Naive thymus-derived CD4-positive, alpha-beta T cell (primary cell): ENCODE measurements at regions of chr3 and their contacts with region 1.

Region 1: DNA sequence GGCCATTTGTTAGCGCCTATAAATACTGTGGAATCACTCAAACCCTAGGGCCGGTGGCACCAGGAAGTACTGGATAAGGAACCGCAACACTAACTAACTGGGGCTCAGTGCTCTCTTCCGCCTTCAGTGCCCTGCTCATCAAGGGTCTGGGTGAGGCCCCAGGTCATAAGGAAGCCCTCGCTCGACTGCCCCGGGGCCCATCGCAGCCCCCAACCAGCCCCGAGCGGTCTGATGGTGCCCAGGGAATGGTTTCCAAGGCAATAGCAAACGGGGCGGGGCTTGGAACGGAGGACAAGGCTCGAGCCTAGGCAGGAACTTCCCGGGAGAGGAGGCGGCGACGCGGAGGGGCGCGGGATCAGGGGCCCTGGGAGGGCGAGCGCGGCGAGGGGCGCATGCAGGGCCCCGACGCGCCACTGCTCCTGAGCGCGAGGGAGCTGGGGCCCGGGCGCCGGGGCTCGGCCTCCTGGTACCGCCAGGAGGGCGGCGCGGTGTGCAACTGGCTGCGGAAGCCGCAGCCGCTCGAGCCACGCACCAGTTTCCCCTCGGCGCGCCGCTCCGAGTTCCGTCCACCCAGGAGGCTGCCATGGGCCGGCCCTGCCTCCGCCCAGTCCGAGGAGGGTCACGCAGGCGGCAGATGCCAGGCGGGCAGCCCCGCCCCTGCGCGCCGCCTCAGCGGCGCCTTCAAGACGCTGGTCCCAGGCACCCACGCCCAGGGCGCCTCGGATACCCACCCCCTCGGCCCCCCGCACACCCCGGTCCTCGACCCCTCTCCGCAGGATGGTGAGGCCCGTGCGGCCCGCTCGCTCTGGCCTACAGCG is at the start of gene TTLL3:
- DNase-seq: peak; percentile 33 to 50 (median 43)
- ATAC-seq: peak; percentile 76
- H3K4me3 ChIP-seq: peak within 1 kb of the TSS; percentile 76
- H3K4me3 Mint-ChIP-seq: peak within 1 kb of the TSS; percentile 89 to 96 (median 92)
- H3K27ac ChIP-seq: peak within 1 kb of the TSS; percentile 90
- H3K27ac Mint-ChIP-seq: peak within 1 kb of the TSS; percentile 92 to 98 (median 96)
- H3K4me1 ChIP-seq: peaks cover 21 to 28% of the 10 kb centered on the region in 2 donors
- H3K4me1 Mint-ChIP-seq: peaks cover 31 to 41% (median 38%) of the 10 kb centered on the region in 7 donors
- H3K27me3 ChIP-seq: no peaks in the 10 kb centered on the region
- H3K27me3 Mint-ChIP-seq: no peaks in the 10 kb centered on the region
- total RNA-seq, gene TTLL3: 54.9 to 106 (median 68.0) TPM

Region 2: GRCh38 chr3:9946112-9947024 is 136.5 kb after region 1 on chr3:
- CTCF ChIA-PET with region 1: no interaction called
- POLR2A ChIA-PET with region 1: no interaction called
- intact Hi-C with region 1: loop called in 1 of 2 experiments (anchors 1 kb)
- DNase-seq: peak; percentile 70 to 88 (median 80)
- ATAC-seq: peak; percentile 94
- H3K4me3 ChIP-seq: peak overlapping the region; percentile 50
- H3K4me3 Mint-ChIP-seq: peak overlapping the region; percentile 42 to 85 (median 78)
- H3K27ac ChIP-seq: peak overlapping the region; percentile 74
- H3K27ac Mint-ChIP-seq: peak overlapping the region in 8 of 9 donors; percentile 56 to 91 (median 82)
- H3K4me1 ChIP-seq: peaks cover 7% of the 10 kb centered on the region in 2 donors
- H3K4me1 Mint-ChIP-seq: peaks cover 8 to 16% (median 11%) of the 10 kb centered on the region in 7 donors
- H3K27me3 ChIP-seq: no peaks in the 10 kb centered on the region
- H3K27me3 Mint-ChIP-seq: no peaks in the 10 kb centered on the region

Region 3: DNA sequence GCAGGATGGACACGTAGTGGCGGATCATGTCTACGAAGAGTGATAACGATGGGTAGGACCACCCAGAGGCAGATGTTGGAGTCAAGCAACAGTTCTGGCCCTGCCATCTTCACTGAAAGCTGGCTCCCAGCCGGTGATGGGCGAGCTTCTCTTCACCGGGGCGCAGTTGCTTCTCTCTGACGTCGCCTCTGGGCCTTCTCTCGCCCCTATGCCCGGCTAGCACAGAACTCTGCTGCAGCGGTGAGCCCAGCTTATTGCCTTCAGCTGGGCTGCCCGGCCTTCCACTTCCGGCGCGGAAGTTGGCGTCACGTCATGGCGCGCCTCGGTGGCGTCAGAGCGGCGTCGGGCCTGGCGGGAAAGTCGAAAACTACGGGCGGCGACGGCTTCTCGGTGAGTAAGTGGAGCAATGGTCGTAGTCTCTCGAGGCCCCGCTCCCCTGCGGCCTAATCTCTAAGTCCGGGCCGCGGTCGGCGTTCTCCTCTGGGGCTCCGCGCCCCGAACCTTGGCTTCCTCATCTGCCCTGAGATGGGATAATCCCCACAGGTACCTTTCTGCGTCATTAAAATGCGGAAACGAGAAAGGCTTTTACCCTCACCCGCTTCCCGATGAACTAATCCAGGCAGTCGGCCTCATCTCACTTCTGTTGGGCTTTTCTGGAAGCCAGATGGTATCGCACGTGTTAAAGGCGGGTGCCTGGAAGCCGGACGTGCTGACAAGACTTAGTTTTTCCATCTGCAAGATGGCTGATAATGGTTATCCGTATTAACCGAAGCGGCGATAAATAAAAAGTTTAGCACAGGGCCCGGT is 216.5 kb after region 1 on chr3 and contains the start of gene FANCD2:
- CTCF ChIA-PET with region 1: no interaction called
- POLR2A ChIA-PET with region 1: no interaction called
- intact Hi-C with region 1: no loop called
- DNase-seq: peak; percentile 88 to 99 (median 94)
- ATAC-seq: peak; percentile 95
- H3K4me3 ChIP-seq: peak within 1 kb of the TSS; percentile 96
- H3K4me3 Mint-ChIP-seq: peak within 1 kb of the TSS; percentile 93 to 99 (median 96)
- H3K27ac ChIP-seq: peak within 1 kb of the TSS; percentile 89
- H3K27ac Mint-ChIP-seq: peak within 1 kb of the TSS; percentile 86 to 98 (median 97)
- H3K4me1 ChIP-seq: peaks cover 11 to 13% of the 10 kb centered on the region in 2 donors
- H3K4me1 Mint-ChIP-seq: peaks cover 0 to 45% (median 29%) of the 10 kb centered on the region in 7 donors
- H3K27me3 ChIP-seq: no peaks in the 10 kb centered on the region
- H3K27me3 Mint-ChIP-seq: no peaks in the 10 kb centered on the region
- total RNA-seq, gene FANCD2: 18.3 to 41.5 (median 34.1) TPM